ENCODE measurements at regions of chr12 and their contacts with region 1.

Region 1: DNA sequence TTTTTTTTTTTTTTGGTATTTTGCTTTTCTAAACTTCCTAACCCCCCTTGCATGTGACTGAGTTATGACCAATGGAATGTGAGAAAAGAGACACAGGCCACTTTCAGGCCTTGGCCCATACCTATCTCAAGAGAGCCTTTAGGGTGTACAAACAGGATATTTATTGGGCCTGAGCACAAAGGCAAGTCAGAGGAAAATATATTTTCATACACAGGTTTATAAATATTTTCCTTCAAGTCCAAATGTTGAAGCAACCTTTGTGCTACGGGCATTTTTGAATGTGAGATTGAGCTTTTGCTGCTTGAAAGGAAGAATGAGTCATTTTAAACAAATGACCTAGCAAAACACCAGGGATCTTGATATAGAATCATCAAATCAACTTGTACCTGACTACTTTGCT is 228.6 kb upstream of the E2F7 start:
- DNase-seq: no peak
- H3K4me3 Mint-ChIP-seq: no peak overlapping the region
- H3K27ac Mint-ChIP-seq: peak overlapping the region; percentile 53
- H3K4me1 Mint-ChIP-seq: peaks cover 29% of the 10 kb centered on the region
- H3K27me3 Mint-ChIP-seq: no peaks in the 10 kb centered on the region
- CTCF ChIP-seq: no peak

Region 2: GRCh38 chr12:76611533-76611932 is 682.5 kb before region 1 on chr12:
- CTCF ChIA-PET with region 1: no interaction called
- intact Hi-C with region 1: no loop called
- DNase-seq: no peak
- H3K4me3 Mint-ChIP-seq: no peak overlapping the region
- H3K27ac Mint-ChIP-seq: no peak overlapping the region
- H3K4me1 Mint-ChIP-seq: no peaks in the 10 kb centered on the region
- H3K27me3 Mint-ChIP-seq: no peaks in the 10 kb centered on the region
- CTCF ChIP-seq: no peak

Region 3: GRCh38 chr12:77102691-77103090 is 191.3 kb before region 1 on chr12:
- CTCF ChIA-PET with region 1: no interaction called
- intact Hi-C with region 1: no loop called
- DNase-seq: no peak
- H3K4me3 Mint-ChIP-seq: no peak overlapping the region
- H3K27ac Mint-ChIP-seq: peak overlapping the region; percentile 82
- H3K4me1 Mint-ChIP-seq: peaks cover 38% of the 10 kb centered on the region
- H3K27me3 Mint-ChIP-seq: no peaks in the 10 kb centered on the region
- CTCF ChIP-seq: no peak

Region 4: DNA sequence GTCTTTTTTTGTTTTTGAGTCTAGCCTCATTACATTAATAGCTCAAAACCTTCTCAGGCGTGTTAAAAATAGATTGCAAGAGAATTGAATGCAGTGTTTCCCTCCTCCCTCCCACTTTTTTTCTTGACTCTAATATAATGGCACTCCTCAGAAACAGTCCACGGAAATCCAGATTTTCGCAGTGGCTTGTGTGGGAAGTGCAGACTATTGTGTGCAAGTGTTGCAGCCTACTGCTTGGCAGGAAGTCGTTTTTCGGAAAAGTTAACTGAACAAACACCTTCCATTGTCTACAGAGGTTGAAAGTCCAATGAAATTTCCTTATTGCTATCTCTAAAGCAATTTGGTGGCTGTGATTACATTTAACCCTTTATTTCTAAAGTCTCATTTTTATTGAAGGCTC is 80.7 kb before region 1 on chr12:
- CTCF ChIA-PET with region 1: no interaction called
- intact Hi-C with region 1: loop called (anchors 5 kb)
- DNase-seq: peak; percentile 36
- H3K4me3 Mint-ChIP-seq: no peak overlapping the region
- H3K27ac Mint-ChIP-seq: peak overlapping the region; percentile 2
- H3K4me1 Mint-ChIP-seq: peaks cover 16% of the 10 kb centered on the region
- H3K27me3 Mint-ChIP-seq: no peaks in the 10 kb centered on the region
- CTCF ChIP-seq: no peak

Region 5: GRCh38 chr12:77231501-77231918 is 62.5 kb before region 1 on chr12:
- CTCF ChIA-PET with region 1: no interaction called
- intact Hi-C with region 1: loop called (anchors 5 kb)
- DNase-seq: peak; percentile 69
- H3K4me3 Mint-ChIP-seq: peak overlapping the region; percentile 9
- H3K27ac Mint-ChIP-seq: peak overlapping the region; percentile 34
- H3K4me1 Mint-ChIP-seq: peaks cover 21% of the 10 kb centered on the region
- H3K27me3 Mint-ChIP-seq: no peaks in the 10 kb centered on the region
- CTCF ChIP-seq: no peak

Region 6: GRCh38 chr12:77599782-77600467 is 305.9 kb after region 1 on chr12:
- CTCF ChIA-PET with region 1: no interaction called
- intact Hi-C with region 1: no loop called
- DNase-seq: no peak
- H3K4me3 Mint-ChIP-seq: peak overlapping the region; percentile 2
- H3K27ac Mint-ChIP-seq: peak overlapping the region; percentile 1
- H3K4me1 Mint-ChIP-seq: peaks cover 46% of the 10 kb centered on the region
- H3K27me3 Mint-ChIP-seq: no peaks in the 10 kb centered on the region
- CTCF ChIP-seq: no peak

Region 7: DNA sequence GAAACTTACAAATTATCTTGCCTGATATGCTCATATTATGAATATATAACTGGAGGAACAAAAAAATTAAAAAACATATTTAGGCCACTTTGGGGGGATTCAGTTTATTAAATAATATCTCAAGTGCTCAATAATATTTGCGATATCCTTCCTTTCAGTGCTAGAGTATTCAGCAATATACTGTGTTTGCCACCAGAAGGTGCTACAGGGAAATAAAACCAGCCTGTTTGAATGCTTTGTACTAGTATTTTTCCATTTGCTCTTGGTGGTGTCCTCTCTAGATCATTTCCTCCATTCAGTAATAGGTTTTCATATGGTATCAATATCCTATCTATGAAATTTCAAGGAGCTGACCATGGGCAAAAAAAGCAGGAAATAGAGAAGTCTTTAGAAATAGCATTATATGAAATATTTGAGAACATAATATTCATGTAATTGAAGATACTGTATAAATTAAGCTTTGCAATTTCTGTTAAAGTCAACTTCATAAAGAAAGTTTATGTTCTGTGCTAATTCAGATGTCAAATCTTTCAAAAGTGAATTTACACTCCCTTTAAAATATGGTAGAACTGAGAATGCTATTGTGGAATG is 430.4 kb after region 1 on chr12:
- CTCF ChIA-PET with region 1: no interaction called
- intact Hi-C with region 1: no loop called
- DNase-seq: peak; percentile 30
- H3K4me3 Mint-ChIP-seq: no peak overlapping the region
- H3K27ac Mint-ChIP-seq: no peak overlapping the region
- H3K4me1 Mint-ChIP-seq: no peaks in the 10 kb centered on the region
- H3K27me3 Mint-ChIP-seq: no peaks in the 10 kb centered on the region
- CTCF ChIP-seq: peak; percentile 71